Right ventricle myocardium superior (tissue), 1 donor: ENCODE measurements at regions of chr1 and their contacts with region 1.

Region 1: GRCh38 chr1:185317034-185317885 is at the start of gene IVNS1ABP:
- DNase-seq: peak; percentile 96
- ATAC-seq: peak; percentile 93
- total RNA-seq, gene IVNS1ABP: 58.4 TPM

Region 2: GRCh38 chr1:185652348-185652747 is 335.1 kb after region 1 on chr1:
- intact Hi-C with region 1: loop called (anchors 10 kb)
- DNase-seq: no peak
- ATAC-seq: no peak